ENCODE measurements at regions of chrX and their contacts with region 1.

Region 1: GRCh38 chrX:72620550-72621145 is 48.0 kb upstream of the HDAC8 start:
- DNase-seq: peak; percentile 74
- ATAC-seq: peak; percentile 97
- H3K4me3 ChIP-seq: peak overlapping the region; percentile 29 to 38
- H3K27ac ChIP-seq: peak overlapping the region; percentile 48
- H3K4me1 ChIP-seq: peaks cover 14 to 30% of the 10 kb centered on the region in 2 experiments
- H3K27me3 ChIP-seq: no peaks in the 10 kb centered on the region
- CTCF ChIP-seq: no peak
- POLR2A ChIP-seq: no peak
- RAD21 ChIP-seq: no peak

Region 2: DNA sequence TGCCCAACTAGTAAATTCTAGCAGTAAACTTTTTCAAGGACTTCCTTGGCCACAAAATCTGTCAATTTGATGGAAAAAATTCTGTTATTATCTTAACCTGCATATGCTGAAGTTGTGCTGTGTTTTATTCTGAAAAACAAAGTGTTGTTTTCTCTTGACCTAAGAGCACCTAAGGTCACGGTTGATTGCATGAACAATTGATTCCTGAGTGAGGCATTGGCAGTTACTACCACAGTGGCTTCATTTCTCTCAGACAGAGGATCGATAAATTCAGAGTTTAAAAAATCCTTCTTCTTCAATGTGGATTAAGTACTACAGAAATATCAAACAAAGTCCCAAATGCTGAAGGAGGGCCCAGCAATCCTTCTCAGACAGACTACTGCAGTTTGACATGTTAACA is 54.2 kb before region 1 on chrX:
- CTCF ChIA-PET with region 1: no interaction called
- POLR2A ChIA-PET with region 1: no interaction called
- RAD21 ChIA-PET with region 1: no interaction called
- intact Hi-C with region 1: no loop called
- DNase-seq: no peak
- ATAC-seq: no peak
- H3K4me3 ChIP-seq: no peak overlapping the region
- H3K27ac ChIP-seq: no peak overlapping the region
- H3K4me1 ChIP-seq: no peaks in the 10 kb centered on the region
- H3K27me3 ChIP-seq: no peaks in the 10 kb centered on the region
- CTCF ChIP-seq: no peak
- POLR2A ChIP-seq: no peak
- RAD21 ChIP-seq: no peak

Region 3: DNA sequence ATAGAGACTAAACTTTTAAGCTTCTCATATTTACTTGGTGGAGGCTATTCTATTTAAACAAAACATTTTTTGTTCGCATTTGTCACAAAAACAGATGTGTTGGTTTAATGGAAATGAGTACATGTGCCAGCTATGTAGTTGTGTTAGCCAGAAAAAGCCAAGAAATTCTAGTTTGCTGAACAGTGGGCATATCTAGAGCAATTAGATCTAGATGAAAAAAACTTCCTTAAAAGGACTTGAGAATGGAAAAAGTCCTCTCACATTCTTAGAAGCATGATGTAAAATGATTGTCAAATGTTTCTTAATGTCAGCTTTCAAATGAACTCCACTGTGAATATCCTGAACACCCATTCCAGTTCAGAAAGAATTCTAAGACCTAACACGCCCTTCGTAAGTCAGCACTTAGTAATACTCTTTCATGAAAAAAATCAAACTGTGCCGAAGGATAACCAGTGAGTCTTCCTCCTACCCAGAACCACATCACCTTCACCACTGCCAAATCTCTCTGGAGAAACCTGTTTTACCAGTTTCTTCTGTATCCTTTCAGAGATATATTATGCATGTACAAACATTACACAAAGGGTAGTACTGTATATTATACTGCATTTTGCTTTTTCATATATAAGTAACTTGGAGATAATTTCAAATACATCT is 65.3 kb after region 1 on chrX:
- CTCF ChIA-PET with region 1: no interaction called
- POLR2A ChIA-PET with region 1: no interaction called
- RAD21 ChIA-PET with region 1: no interaction called
- intact Hi-C with region 1: loop called (anchors 2 kb)
- DNase-seq: peak; percentile 81
- ATAC-seq: peak; percentile 96
- H3K4me3 ChIP-seq: peak overlapping the region in 1 of 2 experiments; percentile 37; a peak in 2 of 4 replicates
- H3K27ac ChIP-seq: peak overlapping the region; percentile 52; the same call in 1 of the 2 replicates
- H3K4me1 ChIP-seq: peaks cover 10 to 34% of the 10 kb centered on the region in 2 experiments
- H3K27me3 ChIP-seq: no peaks in the 10 kb centered on the region
- CTCF ChIP-seq: no peak
- POLR2A ChIP-seq: no peak
- RAD21 ChIP-seq: peak; percentile 16; the same call in 1 of the 2 replicates

Region 4: DNA sequence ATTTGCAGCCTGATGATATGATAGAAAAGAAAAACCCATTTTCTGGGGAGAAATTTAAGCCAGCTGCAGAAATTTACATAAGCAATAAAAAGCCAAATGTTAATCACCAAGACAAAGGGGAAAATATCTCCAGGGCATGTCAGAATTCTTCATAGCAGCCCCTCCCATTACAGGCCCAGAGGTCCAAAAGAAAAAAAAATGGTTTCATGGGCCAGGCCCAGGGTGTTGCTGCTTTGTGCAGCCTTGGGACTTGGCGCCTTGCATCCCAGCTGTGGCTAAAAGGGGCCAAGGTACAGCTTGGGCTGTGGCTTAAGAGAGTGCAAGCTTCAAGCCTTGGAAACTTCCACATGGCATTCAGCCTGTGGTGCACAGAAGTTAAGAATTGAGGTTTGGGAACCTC is 728.3 kb after region 1 on chrX:
- CTCF ChIA-PET with region 1: no interaction called
- POLR2A ChIA-PET with region 1: no interaction called
- RAD21 ChIA-PET with region 1: no interaction called
- intact Hi-C with region 1: no loop called
- DNase-seq: no peak
- ATAC-seq: no peak
- H3K4me3 ChIP-seq: no peak overlapping the region
- H3K27ac ChIP-seq: no peak overlapping the region
- H3K4me1 ChIP-seq: no peaks in the 10 kb centered on the region
- H3K27me3 ChIP-seq: no peaks in the 10 kb centered on the region
- CTCF ChIP-seq: no peak
- POLR2A ChIP-seq: no peak
- RAD21 ChIP-seq: no peak

Measured in HCT116 (cell line).